MCF 10A (cell line): ENCODE measurements at regions of chr7 and their contacts with region 1.

Region 1: DNA sequence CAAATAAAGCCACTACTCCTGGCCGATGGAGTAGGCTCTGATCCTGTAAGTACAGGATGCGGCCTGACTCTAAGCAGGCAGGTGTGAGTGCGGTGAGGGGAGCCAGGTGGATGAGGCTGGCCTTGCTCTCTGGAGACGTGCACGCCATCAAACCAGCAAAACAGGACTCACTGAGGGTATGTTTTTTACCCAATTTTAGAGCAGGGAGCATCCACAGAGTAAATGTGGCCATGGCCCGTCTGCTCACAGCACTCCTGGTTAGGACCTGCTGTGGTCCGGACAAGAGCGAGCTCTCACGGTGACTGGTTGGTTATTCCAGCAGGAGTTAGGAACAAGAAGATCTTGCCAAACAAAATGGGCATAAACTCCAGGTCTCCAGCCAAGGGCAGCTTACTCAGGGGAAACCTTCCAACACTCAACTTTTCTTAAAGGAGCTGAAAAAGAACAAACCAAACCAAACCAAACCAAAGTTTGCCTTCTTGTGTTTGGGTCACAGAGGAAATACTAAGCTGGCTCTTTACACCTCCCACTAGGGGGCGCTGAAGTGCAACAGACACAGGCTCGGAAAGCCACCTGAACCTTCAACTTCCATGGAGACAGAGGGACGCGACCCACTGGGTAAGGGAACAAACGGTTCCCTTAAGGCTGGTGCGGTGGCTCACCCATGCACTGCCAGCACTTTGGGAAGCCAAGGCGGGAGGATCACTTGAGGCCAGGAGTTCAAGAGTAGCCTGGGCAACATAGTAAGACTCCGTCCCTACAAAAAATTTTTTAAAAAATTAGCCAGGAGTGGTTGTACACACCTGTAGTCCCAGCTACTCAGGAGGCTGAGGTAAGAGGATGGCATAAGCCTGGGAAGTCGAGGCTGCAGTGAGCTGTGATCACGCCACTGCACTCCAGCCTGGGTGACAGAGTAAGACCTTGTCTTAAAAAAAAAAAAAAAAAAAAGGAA is 122.4 kb downstream of the CLEC2L start:
- DNase-seq: peak; percentile 93
- H3K4me3 Mint-ChIP-seq: no peak overlapping the region
- H3K27ac Mint-ChIP-seq: peak overlapping the region; percentile 43
- H3K4me1 Mint-ChIP-seq: peaks cover 21% of the 10 kb centered on the region
- H3K27me3 Mint-ChIP-seq: no peaks in the 10 kb centered on the region
- CTCF ChIP-seq: peak; percentile 93

Region 2: DNA sequence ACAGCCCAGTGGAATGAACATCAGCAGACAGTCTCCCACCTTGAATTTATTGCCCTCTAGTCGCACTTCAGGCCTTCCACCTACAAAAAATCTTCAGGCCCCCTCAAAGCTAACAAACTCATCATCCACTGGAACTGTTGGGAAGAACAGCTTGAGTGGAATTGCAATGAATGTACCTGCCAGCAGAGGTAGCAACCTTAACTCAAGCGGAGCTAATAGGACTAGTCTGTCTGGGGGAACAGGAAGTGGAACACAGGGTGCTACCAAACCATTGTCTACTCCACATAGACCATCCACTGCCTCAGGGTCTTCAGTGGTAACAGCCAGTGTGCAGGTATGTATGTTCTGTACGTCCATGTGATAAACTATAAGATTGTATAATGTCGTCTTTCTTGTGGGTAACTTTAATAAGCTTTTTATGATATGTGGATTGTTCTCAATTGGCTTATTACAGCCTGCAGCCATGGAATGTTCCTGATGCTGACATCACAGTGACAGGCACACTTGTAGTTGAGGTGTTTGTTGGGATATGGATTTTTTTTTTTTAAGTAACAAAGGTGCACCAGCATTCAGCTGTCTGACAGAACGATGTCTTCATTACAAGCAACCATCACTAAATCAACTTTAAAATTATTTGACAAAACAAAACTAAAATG is 361.5 kb before region 1 on chr7:
- CTCF ChIA-PET with region 1: no interaction called
- POLR2A ChIA-PET with region 1: no interaction called
- intact Hi-C with region 1: no loop called
- DNase-seq: peak; percentile 1
- H3K4me3 Mint-ChIP-seq: no peak overlapping the region
- H3K27ac Mint-ChIP-seq: no peak overlapping the region
- H3K4me1 Mint-ChIP-seq: no peaks in the 10 kb centered on the region
- H3K27me3 Mint-ChIP-seq: no peaks in the 10 kb centered on the region
- CTCF ChIP-seq: no peak

Region 3: DNA sequence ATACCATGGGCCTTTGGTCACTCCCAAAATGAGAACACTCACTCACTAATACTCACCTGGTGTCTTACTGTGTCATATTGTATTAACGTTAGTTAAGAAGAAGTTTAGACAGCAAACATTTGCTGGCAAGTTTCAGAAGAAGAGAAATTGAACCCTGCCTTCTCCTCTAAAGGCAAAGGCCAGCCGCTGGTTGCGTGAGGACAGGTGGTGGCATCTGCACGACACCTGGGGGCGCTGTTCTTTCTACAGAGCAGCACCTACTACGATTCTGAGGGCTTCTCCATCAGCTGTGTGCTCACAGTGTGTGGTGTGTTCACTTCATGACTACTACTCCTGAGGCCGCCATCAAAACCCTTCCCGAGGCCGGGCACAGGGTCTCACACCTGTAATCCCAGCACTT is 140.3 kb before region 1 on chr7:
- CTCF ChIA-PET with region 1: interaction called, 3 read pairs
- POLR2A ChIA-PET with region 1: no interaction called
- intact Hi-C with region 1: loop called (anchors 10 kb)
- DNase-seq: peak; percentile 39
- H3K4me3 Mint-ChIP-seq: no peak overlapping the region
- H3K27ac Mint-ChIP-seq: no peak overlapping the region
- H3K4me1 Mint-ChIP-seq: no peaks in the 10 kb centered on the region
- H3K27me3 Mint-ChIP-seq: no peaks in the 10 kb centered on the region
- CTCF ChIP-seq: no peak

Region 4: GRCh38 chr7:139635526-139636302 is 10.1 kb before region 1 on chr7:
- CTCF ChIA-PET with region 1: interaction called, 19 read pairs
- POLR2A ChIA-PET with region 1: interaction called, 3 read pairs
- intact Hi-C with region 1: no loop called
- DNase-seq: no peak
- H3K4me3 Mint-ChIP-seq: no peak overlapping the region
- H3K27ac Mint-ChIP-seq: peak overlapping the region; percentile 1
- H3K4me1 Mint-ChIP-seq: peaks cover 5% of the 10 kb centered on the region
- H3K27me3 Mint-ChIP-seq: no peaks in the 10 kb centered on the region
- CTCF ChIP-seq: no peak

Region 5: DNA sequence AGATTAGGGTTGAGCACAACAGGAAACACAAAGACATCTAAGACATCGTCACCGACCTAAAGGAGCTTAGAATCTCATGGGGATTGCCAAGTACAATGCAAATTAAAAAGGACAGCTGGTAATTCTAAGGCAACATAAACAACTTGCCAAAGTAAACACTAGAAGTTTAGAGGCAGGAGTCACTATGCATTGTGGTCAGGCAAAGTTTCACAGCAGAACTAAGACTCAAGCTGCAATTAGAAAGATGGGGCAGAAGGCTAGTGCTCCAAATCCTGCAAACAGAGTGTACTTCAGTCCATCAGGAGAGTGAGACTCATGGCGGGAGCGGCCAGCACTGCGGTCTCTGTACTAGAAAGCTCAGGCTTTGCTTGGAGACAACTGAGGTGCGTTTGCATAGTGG is 79.2 kb after region 1 on chr7:
- CTCF ChIA-PET with region 1: interaction called, 3 read pairs
- POLR2A ChIA-PET with region 1: interaction called, 10 read pairs
- intact Hi-C with region 1: no loop called
- DNase-seq: peak; percentile 85
- H3K4me3 Mint-ChIP-seq: peak overlapping the region; percentile 54
- H3K27ac Mint-ChIP-seq: peak overlapping the region; percentile 68
- H3K4me1 Mint-ChIP-seq: peaks cover 43% of the 10 kb centered on the region
- H3K27me3 Mint-ChIP-seq: no peaks in the 10 kb centered on the region
- CTCF ChIP-seq: no peak

Region 6: DNA sequence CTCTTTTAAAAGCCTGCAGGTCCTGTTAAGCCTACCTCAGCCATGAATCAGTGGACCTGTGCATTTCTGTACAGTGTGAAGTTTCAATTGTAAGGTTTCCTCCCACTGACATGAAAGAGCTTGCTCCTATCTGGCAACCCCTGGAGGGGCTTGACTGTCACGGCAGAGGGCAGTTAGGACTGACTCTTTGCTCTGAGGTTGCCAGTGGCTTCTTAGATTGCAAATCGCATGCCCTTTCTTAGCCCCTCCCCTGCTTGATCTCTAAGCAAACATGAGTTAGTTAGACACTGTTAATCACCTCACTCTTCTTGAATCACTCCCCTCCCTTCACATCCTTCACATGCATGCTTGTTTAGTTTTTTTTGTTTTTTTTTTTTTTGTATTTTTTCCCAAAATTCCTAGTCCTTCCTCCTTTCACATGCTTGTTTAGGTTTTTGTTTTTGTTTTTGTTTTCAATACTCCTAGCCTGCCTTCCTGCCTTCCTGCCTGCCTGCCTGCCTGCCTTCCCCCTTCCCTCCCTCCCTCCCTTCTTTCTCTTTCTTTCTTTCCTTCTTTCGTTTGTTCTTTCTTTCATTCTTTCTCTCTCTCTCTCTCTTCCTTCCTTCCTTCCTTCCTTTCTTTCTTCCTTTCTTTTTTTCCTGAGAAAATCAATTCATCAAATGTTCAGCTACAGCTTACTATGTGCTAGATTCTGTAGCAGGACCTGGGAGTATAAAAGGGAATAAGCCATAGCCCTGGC is 138.0 kb after region 1 on chr7:
- CTCF ChIA-PET with region 1: interaction called, 14 read pairs
- POLR2A ChIA-PET with region 1: interaction called, 3 read pairs
- intact Hi-C with region 1: no loop called
- DNase-seq: peak; percentile 55
- H3K4me3 Mint-ChIP-seq: no peak overlapping the region
- H3K27ac Mint-ChIP-seq: no peak overlapping the region
- H3K4me1 Mint-ChIP-seq: peaks cover 13% of the 10 kb centered on the region
- H3K27me3 Mint-ChIP-seq: no peaks in the 10 kb centered on the region
- CTCF ChIP-seq: no peak

Region 7: GRCh38 chr7:140003913-140004382 is 358.1 kb after region 1 on chr7:
- CTCF ChIA-PET with region 1: interaction called, 179 read pairs
- POLR2A ChIA-PET with region 1: interaction called, 4 read pairs
- intact Hi-C with region 1: loop called (anchors 1 kb)
- DNase-seq: peak; percentile 80
- H3K4me3 Mint-ChIP-seq: no peak overlapping the region
- H3K27ac Mint-ChIP-seq: no peak overlapping the region
- H3K4me1 Mint-ChIP-seq: no peaks in the 10 kb centered on the region
- H3K27me3 Mint-ChIP-seq: no peaks in the 10 kb centered on the region
- CTCF ChIP-seq: peak; percentile 56